ENCODE measurements at regions of chr9 and their contacts with region 1.

Region 1: GRCh38 chr9:101530077-101530711 is 3.5 kb upstream of the RNF20 start:
- DNase-seq: peak; percentile 77
- ATAC-seq: peak; percentile 24
- H3K4me3 Mint-ChIP-seq: no peak overlapping the region
- H3K27ac Mint-ChIP-seq: no peak overlapping the region
- H3K4me1 Mint-ChIP-seq: peaks cover 13% of the 10 kb centered on the region
- H3K27me3 Mint-ChIP-seq: no peaks in the 10 kb centered on the region

Region 2: GRCh38 chr9:101449140-101449721 is 81.0 kb before region 1 on chr9:
- CTCF ChIA-PET with region 1: interaction called, 24 read pairs
- POLR2A ChIA-PET with region 1: no interaction called
- DNase-seq: peak; percentile 61
- ATAC-seq: peak; percentile 99
- H3K4me3 Mint-ChIP-seq: peak overlapping the region; percentile 56
- H3K27ac Mint-ChIP-seq: no peak overlapping the region
- H3K4me1 Mint-ChIP-seq: peaks cover 4% of the 10 kb centered on the region
- H3K27me3 Mint-ChIP-seq: peaks cover 41% of the 10 kb centered on the region

Region 3: GRCh38 chr9:101458955-101459631 is 71.1 kb before region 1 on chr9:
- CTCF ChIA-PET with region 1: interaction called, 38 read pairs
- POLR2A ChIA-PET with region 1: no interaction called
- DNase-seq: peak; percentile 29
- ATAC-seq: peak; percentile 87
- H3K4me3 Mint-ChIP-seq: no peak overlapping the region
- H3K27ac Mint-ChIP-seq: no peak overlapping the region
- H3K4me1 Mint-ChIP-seq: no peaks in the 10 kb centered on the region
- H3K27me3 Mint-ChIP-seq: peaks cover 11% of the 10 kb centered on the region

Region 4: DNA sequence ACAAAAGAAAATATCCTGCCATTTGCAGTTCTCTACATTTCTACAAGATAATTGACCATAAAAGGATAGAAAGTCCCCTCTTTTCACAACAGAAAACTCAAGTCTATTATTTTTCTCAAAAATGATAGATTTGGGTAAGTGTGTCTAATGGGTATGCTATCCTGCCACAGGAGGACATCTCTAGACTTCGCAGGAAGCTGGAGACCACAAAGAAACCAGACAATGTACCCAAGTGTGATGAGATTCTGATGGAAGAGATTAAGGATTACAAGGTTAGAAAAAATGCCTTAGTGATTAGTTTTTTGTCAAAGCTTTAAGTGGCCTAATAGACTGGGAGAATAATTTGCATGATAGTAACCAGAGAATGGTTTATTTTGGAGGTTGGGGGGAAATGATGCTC is 31.5 kb after region 1 on chr9:
- CTCF ChIA-PET with region 1: no interaction called
- POLR2A ChIA-PET with region 1: no interaction called
- DNase-seq: no peak
- ATAC-seq: no peak
- H3K4me3 Mint-ChIP-seq: no peak overlapping the region
- H3K27ac Mint-ChIP-seq: no peak overlapping the region
- H3K4me1 Mint-ChIP-seq: peaks cover 14% of the 10 kb centered on the region
- H3K27me3 Mint-ChIP-seq: no peaks in the 10 kb centered on the region

Region 5: GRCh38 chr9:101907466-101907865 is 377.3 kb after region 1 on chr9:
- CTCF ChIA-PET with region 1: no interaction called
- POLR2A ChIA-PET with region 1: no interaction called
- DNase-seq: no peak
- ATAC-seq: no peak
- H3K4me3 Mint-ChIP-seq: no peak overlapping the region
- H3K27ac Mint-ChIP-seq: no peak overlapping the region
- H3K4me1 Mint-ChIP-seq: no peaks in the 10 kb centered on the region
- H3K27me3 Mint-ChIP-seq: no peaks in the 10 kb centered on the region